Activated CD4-positive, alpha-beta T cell treated with anti-CD3 and anti-CD28 coated beads, Interleukin-2, amount 10 ng/mL, durations not matched to agents 24 days and 14 days (primary cell): ENCODE measurements at regions of chr1 and their contacts with region 1.

Region 1: DNA sequence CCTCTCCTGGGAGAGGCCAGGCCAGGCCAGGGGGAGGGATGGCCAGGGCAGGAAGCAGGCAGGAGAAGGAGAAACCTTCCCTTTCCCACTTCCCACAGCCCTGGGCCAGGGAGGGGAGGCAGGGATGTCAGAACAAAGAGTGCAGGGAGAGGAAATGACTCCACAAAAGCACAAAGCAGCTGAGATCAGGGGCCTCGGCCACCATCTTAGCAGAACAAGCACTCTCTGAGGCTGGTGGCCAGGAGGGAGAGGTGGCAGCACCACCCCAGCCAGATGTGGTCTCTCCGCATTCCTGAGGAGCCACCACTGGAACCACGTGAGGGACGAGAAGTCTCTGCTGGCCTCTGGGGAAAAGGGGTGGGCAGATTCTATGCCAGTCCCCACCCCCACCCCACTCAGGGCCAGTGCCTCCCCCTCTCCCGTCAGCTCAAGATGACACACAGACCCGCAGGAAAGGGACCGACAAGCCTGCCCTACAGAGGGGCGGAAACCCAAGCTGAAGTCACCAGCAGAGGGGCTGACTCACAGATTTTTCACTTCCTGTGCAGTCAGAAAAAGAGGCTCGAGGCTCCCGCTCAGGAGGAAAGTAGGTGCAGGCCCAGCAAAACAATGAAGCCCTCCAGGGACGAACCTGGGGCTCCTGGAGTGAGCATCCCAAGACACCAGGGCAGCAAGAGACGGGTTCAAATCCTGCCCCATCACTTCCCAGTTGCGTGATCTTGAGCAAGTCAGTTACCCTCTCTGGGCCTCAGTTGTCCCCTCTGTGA is 24.1 kb upstream of the ALDH4A1 start:
- DNase-seq: peak; percentile 95
- H3K4me3 Mint-ChIP-seq: peak overlapping the region; percentile 88
- H3K27ac Mint-ChIP-seq: peak overlapping the region; percentile 99
- H3K4me1 Mint-ChIP-seq: peaks cover 61% of the 10 kb centered on the region
- H3K27me3 Mint-ChIP-seq: no peaks in the 10 kb centered on the region

Region 2: GRCh38 chr1:18902523-18903290 is 23.8 kb before region 1 on chr1 and contains the start of gene ALDH4A1:
- intact Hi-C with region 1: loop called (anchors 1 kb)
- DNase-seq: peak; percentile 98
- H3K4me3 Mint-ChIP-seq: peak within 1 kb of the TSS; percentile 96
- H3K27ac Mint-ChIP-seq: peak within 1 kb of the TSS; percentile 97
- H3K4me1 Mint-ChIP-seq: peaks cover 27% of the 10 kb centered on the region
- H3K27me3 Mint-ChIP-seq: no peaks in the 10 kb centered on the region
- total RNA-seq, gene ALDH4A1: 2.8 and 5.2 TPM in 2 replicates

Region 3: GRCh38 chr1:18949686-18950400 is 23.3 kb after region 1 on chr1:
- intact Hi-C with region 1: loop called (anchors 1 kb)
- DNase-seq: peak; percentile 76
- H3K4me3 Mint-ChIP-seq: peak overlapping the region; percentile 78
- H3K27ac Mint-ChIP-seq: peak overlapping the region; percentile 98
- H3K4me1 Mint-ChIP-seq: peaks cover 90% of the 10 kb centered on the region
- H3K27me3 Mint-ChIP-seq: no peaks in the 10 kb centered on the region

Region 4: DNA sequence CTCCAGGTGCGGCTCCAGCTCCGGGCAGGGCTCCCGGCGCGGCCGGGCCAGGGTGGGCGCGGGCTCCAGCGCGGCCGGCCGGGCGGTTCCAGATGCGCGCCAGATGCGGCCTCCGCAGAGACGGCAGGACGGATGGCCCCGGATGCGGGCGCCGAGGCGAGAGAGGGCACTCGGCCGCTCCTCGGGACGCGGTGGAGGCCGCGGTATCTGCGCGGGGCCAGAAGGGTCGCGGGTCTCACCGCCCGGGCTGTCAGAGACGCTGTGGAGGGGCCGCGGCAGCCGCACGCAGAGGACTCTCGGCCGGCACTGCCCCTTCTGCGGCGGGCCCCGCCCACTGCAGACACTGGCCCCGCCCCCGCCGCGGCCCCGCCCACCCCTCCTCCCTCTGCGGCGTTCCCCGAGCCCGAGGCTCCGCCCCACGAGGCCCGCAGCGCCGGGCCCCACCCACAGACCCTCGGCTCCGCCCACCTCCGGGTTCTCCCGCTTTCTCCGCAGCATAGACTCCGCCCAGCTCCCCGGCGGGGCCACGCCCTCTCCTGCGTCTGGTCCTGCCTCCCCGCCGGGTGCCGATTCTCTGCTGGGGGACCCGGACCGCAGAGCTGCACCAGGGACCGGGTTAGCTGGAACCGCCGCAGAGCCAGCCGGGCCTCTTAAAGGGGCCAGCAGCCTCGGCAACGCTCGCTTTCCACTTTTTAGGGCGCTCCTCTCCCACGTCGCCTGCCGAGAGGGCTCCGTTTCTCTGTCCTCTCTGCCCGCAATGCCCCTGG is 30.1 kb after region 1 on chr1 and contains the start of gene IFFO2:
- intact Hi-C with region 1: loop called (anchors 1 kb)
- DNase-seq: peak; percentile 100
- H3K4me3 Mint-ChIP-seq: peak within 1 kb of the TSS; percentile 88
- H3K27ac Mint-ChIP-seq: peak within 1 kb of the TSS; percentile 87
- H3K4me1 Mint-ChIP-seq: peaks cover 51% of the 10 kb centered on the region
- H3K27me3 Mint-ChIP-seq: peaks cover 21% of the 10 kb centered on the region
- total RNA-seq, gene IFFO2: 32.3 and 36.8 TPM in 2 replicates

Region 5: GRCh38 chr1:19010995-19011844 is 84.7 kb after region 1 on chr1:
- intact Hi-C with region 1: loop called (anchors 1 kb)
- DNase-seq: peak; percentile 93
- H3K4me3 Mint-ChIP-seq: peak overlapping the region; percentile 69
- H3K27ac Mint-ChIP-seq: peak overlapping the region; percentile 87
- H3K4me1 Mint-ChIP-seq: peaks cover 27% of the 10 kb centered on the region
- H3K27me3 Mint-ChIP-seq: peaks cover 2% of the 10 kb centered on the region

Region 6: DNA sequence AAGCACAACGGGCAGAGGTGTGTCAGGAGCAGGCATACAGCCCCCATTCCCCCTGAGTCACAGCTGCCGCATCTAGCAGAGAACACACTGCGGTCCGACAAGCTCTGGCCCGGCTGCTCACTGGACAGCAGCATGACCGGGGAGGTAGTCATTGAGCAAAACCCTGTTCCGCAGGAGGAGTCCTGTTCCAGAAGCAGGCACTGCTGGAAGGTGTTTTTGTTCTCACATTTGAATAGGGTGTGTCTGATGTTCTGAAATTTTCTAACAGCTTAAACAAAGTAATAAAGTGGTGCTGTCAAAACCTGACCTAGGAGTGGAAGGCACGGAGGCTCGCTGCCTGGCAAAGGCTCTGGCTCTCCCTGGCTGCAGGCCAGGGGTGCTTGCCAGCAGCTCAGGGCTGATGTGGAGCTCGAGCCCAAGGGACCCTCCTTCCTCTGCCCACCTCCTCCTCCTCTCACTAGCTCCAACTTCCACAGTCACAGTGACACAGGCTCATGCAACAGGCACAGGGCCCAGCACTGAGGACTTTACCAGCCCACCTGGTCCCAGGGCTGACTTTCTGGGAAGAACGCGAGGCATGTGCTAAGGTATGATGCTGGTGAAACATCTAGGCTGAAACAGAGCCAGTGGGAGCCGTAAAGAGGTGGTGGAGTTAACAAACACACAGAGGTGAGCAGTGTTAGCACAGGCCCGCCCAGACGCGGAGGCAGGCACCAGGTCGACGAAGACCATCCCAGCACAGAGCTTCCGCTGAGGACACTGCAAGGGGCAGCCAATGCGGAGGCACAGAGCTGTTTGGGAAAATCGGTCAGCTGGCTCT is 148.6 kb after region 1 on chr1:
- intact Hi-C with region 1: loop called (anchors 5 kb)
- DNase-seq: no peak
- H3K4me3 Mint-ChIP-seq: peak overlapping the region; percentile 59
- H3K27ac Mint-ChIP-seq: peak overlapping the region; percentile 72
- H3K4me1 Mint-ChIP-seq: peaks cover 30% of the 10 kb centered on the region
- H3K27me3 Mint-ChIP-seq: no peaks in the 10 kb centered on the region

Region 7: GRCh38 chr1:19251305-19252196 is 325.1 kb after region 1 on chr1 and contains the starts of genes EMC1 and MRTO4:
- intact Hi-C with region 1: loop called (anchors 10 kb)
- DNase-seq: peak; percentile 98
- H3K4me3 Mint-ChIP-seq: peak within 1 kb of the TSS; percentile 100
- H3K27ac Mint-ChIP-seq: peak within 1 kb of the TSS; percentile 98
- H3K4me1 Mint-ChIP-seq: peaks cover 24% of the 10 kb centered on the region
- H3K27me3 Mint-ChIP-seq: no peaks in the 10 kb centered on the region
- total RNA-seq, gene EMC1: 67.9 and 71.1 TPM in 2 replicates
- total RNA-seq, gene MRTO4: 132 and 135 TPM in 2 replicates